MCF 10A (cell line): ENCODE measurements at regions of chr2 and their contacts with region 1.

Region 1: DNA sequence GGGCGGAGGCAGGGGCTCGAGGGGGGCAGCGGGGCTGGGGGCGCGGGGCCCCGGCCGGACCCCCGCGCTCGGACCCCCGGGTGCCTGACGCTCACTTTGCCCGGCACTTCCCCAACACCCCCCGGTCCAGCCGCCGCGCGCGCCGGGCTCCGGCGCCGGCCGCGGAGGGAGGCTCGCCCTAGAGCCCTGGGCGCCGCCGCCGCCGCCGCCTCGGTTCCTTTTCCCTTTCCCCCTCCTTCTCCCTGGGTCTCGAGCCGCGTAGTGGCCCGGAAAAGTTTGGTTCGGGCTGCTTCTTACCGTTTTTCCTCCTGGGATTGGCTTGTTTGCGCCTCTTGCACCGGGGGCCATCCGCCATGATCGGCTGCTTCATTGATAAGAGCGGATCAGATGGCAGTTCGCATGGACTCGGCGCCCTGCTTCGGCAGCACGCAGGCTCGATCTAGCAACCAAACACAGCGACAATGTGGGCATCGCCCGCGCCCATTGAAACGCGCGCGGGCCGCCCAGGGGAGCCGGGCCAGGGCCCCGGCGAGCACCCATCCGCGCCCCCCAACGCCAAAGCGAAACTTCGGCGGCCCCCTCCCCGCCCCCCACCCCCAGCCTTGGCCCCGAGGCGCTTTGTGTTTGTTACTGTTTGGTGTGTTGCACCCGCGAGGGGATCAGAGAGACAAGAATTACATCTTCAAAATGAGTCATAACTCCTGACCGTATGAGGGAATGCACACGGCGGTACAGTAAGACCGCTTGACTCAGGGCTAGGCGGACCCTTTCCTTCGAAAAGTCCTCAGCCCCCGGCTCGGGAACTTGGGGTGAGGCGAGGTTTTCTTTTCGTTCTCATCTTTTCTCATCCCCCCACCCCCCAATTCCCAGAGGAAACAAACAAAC is 2.7 kb downstream of the ZEB2 start:
- DNase-seq: peak; percentile 82
- H3K4me3 Mint-ChIP-seq: no peak overlapping the region
- H3K27ac Mint-ChIP-seq: no peak overlapping the region
- H3K4me1 Mint-ChIP-seq: peaks cover 31% of the 10 kb centered on the region
- H3K27me3 Mint-ChIP-seq: no peaks in the 10 kb centered on the region
- CTCF ChIP-seq: no peak

Region 2: GRCh38 chr2:144162652-144163051 is 354.6 kb before region 1 on chr2:
- CTCF ChIA-PET with region 1: no interaction called
- POLR2A ChIA-PET with region 1: no interaction called
- intact Hi-C with region 1: loop called (anchors 5 kb)
- DNase-seq: peak; percentile 40
- H3K4me3 Mint-ChIP-seq: no peak overlapping the region
- H3K27ac Mint-ChIP-seq: no peak overlapping the region
- H3K4me1 Mint-ChIP-seq: no peaks in the 10 kb centered on the region
- H3K27me3 Mint-ChIP-seq: no peaks in the 10 kb centered on the region
- CTCF ChIP-seq: peak; percentile 28

Region 3: GRCh38 chr2:144414324-144414845 is 102.8 kb before region 1 on chr2:
- CTCF ChIA-PET with region 1: no interaction called
- POLR2A ChIA-PET with region 1: no interaction called
- intact Hi-C with region 1: loop called (anchors 2 kb)
- DNase-seq: peak; percentile 94
- H3K4me3 Mint-ChIP-seq: no peak overlapping the region
- H3K27ac Mint-ChIP-seq: peak overlapping the region; percentile 76
- H3K4me1 Mint-ChIP-seq: peaks cover 21% of the 10 kb centered on the region
- H3K27me3 Mint-ChIP-seq: no peaks in the 10 kb centered on the region
- CTCF ChIP-seq: no peak

Region 4: GRCh38 chr2:144632809-144633208 is 115.6 kb after region 1 on chr2:
- CTCF ChIA-PET with region 1: no interaction called
- POLR2A ChIA-PET with region 1: no interaction called
- intact Hi-C with region 1: no loop called
- DNase-seq: no peak
- H3K4me3 Mint-ChIP-seq: no peak overlapping the region
- H3K27ac Mint-ChIP-seq: no peak overlapping the region
- H3K4me1 Mint-ChIP-seq: peaks cover 11% of the 10 kb centered on the region
- H3K27me3 Mint-ChIP-seq: no peaks in the 10 kb centered on the region
- CTCF ChIP-seq: no peak

Region 5: DNA sequence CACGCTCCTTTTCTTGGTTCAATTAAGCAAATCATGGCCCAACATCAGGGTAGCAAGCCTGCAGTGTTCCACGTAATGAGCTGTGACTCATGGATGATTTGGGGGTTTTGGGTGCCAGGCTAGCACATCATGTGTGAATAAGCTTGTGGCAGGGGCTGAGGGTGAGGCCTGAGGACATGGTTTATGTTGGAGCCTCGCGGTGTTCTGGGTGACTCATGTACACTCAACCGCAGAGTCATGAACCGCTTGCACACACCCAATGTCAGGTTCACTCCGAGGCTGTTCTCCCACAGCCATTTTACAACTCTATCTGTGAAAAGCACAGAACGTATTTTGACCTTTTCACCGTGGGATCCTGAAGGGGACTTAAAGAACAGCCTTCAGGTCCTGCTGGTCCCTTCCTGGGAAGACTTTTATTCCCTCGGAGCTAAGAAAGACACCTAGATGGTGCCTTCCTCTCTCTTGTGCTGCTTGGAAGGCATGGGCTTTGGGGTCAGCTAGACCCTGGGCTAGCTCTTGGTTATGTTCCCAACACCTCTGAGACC is 142.6 kb after region 1 on chr2:
- CTCF ChIA-PET with region 1: interaction called, 3 read pairs
- POLR2A ChIA-PET with region 1: interaction called, 6 read pairs
- intact Hi-C with region 1: loop called (anchors 1 kb)
- DNase-seq: peak; percentile 100
- H3K4me3 Mint-ChIP-seq: peak overlapping the region; percentile 22
- H3K27ac Mint-ChIP-seq: peak overlapping the region; percentile 96
- H3K4me1 Mint-ChIP-seq: peaks cover 40% of the 10 kb centered on the region
- H3K27me3 Mint-ChIP-seq: no peaks in the 10 kb centered on the region
- CTCF ChIP-seq: no peak

Region 6: GRCh38 chr2:144890828-144891227 is 373.6 kb after region 1 on chr2:
- CTCF ChIA-PET with region 1: no interaction called
- POLR2A ChIA-PET with region 1: no interaction called
- intact Hi-C with region 1: loop called (anchors 5 kb)
- DNase-seq: peak; percentile 47
- H3K4me3 Mint-ChIP-seq: no peak overlapping the region
- H3K27ac Mint-ChIP-seq: no peak overlapping the region
- H3K4me1 Mint-ChIP-seq: no peaks in the 10 kb centered on the region
- H3K27me3 Mint-ChIP-seq: no peaks in the 10 kb centered on the region
- CTCF ChIP-seq: no peak

Region 7: GRCh38 chr2:145484443-145485097 is 967.3 kb after region 1 on chr2:
- CTCF ChIA-PET with region 1: no interaction called
- POLR2A ChIA-PET with region 1: no interaction called
- intact Hi-C with region 1: loop called (anchors 5 kb)
- DNase-seq: peak; percentile 72
- H3K4me3 Mint-ChIP-seq: no peak overlapping the region
- H3K27ac Mint-ChIP-seq: peak overlapping the region; percentile 91
- H3K4me1 Mint-ChIP-seq: peaks cover 20% of the 10 kb centered on the region
- H3K27me3 Mint-ChIP-seq: no peaks in the 10 kb centered on the region
- CTCF ChIP-seq: peak; percentile 41